Activated CD4-positive, alpha-beta memory T cell treated with anti-CD3 and anti-CD28 coated beads, Interleukin-2, amount 10 ng/mL, durations not matched to agents 7 days and 5 days (primary cell): ENCODE measurements at regions of chr1 and their contacts with region 1.

Region 1: DNA sequence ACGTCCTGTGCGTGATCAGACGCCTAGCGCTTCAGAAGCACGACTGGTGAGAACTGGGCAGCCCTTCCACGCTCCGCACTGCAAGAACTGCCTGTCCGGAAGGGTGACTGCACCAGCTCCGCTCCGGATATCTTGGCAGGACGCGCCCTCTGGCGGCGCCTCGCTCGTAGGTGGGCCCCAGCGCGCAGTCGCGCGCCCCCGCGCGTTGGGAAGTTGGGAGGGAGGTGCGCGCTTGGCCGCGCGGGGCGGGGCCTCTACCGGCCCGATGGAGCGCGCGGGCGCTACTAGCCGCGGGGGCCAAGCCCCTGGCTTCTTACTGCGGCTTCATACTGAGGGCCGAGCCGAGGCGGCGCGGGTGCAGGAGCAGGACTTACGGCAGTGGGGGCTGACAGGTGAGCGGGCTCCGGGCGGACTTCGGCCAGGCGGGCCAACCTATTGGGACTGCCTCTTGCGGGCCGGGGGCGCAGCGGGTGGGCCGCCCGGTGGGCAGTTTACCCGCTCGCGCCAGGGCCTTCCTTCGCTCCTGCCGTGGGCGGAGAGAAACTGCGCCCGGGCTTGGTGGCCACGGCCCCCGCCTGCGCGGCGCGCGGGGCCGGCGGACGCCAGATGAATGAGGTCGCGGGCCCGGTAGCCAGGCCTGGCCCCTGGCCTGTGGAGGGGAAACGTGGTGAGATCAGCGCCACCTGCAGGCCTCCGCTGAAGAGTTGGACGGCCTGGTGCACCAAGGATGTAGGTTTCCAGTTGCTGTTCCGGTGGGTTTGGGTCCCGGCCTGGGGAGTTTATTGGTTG is at the start of gene CHD1L:
- DNase-seq: peak; percentile 95
- H3K4me3 Mint-ChIP-seq: peak within 1 kb of the TSS; percentile 95
- H3K27ac Mint-ChIP-seq: peak within 1 kb of the TSS; percentile 83
- H3K4me1 Mint-ChIP-seq: peaks cover 43% of the 10 kb centered on the region
- H3K27me3 Mint-ChIP-seq: peaks cover 3% of the 10 kb centered on the region
- total RNA-seq, gene CHD1L: 70.0 to 70.9 TPM

Region 2: DNA sequence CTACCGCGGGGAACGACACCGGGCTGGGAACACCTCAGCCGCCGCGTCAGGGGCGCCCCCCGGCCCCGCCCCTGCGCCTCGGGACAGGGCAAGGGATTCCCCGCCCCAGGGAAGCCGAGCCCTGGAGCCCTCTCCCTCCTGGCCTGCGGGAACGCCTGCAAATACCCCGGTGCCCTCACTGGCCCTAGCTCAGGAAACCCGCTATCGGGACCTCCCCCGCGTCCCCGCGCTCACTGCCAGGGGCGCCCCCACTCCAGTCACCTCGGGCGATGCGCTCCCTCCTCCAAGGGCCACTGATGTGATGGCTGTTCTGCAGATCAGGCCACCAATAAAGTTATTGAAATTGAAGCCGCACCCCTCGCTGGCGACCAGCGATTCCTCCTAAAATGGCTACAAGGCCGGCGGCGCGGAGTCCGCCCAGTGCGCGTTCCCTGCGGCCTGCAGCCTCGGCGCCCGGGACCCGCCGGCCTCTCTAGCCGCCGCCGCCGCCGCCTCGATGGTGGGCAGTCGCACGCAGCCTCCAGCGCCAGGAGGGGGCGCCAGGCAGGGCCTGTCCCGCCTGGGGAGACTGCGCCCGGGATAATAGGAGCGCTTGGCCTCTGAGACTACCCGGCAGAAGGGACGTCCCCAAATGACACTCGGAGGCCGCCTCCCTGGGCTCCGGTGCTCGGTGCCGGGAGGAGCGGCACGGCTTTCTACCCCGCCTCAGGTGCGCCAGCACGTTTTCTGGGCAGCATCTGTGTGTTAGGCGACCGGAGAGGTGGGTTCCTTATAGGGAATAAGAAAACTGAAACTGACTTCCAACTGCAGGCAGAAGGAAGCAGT is 70.3 kb before region 1 on chr1 and contains the start of gene PRKAB2:
- CTCF ChIA-PET with region 1: interaction called, 65 read pairs
- POLR2A ChIA-PET with region 1: interaction called, 59 read pairs
- DNase-seq: peak; percentile 94
- H3K4me3 Mint-ChIP-seq: peak within 1 kb of the TSS; percentile 94
- H3K27ac Mint-ChIP-seq: peak within 1 kb of the TSS; percentile 91
- H3K4me1 Mint-ChIP-seq: peaks cover 36% of the 10 kb centered on the region
- H3K27me3 Mint-ChIP-seq: peaks cover 3% of the 10 kb centered on the region
- total RNA-seq, gene PRKAB2: 13.3 to 15.5 TPM

Region 3: DNA sequence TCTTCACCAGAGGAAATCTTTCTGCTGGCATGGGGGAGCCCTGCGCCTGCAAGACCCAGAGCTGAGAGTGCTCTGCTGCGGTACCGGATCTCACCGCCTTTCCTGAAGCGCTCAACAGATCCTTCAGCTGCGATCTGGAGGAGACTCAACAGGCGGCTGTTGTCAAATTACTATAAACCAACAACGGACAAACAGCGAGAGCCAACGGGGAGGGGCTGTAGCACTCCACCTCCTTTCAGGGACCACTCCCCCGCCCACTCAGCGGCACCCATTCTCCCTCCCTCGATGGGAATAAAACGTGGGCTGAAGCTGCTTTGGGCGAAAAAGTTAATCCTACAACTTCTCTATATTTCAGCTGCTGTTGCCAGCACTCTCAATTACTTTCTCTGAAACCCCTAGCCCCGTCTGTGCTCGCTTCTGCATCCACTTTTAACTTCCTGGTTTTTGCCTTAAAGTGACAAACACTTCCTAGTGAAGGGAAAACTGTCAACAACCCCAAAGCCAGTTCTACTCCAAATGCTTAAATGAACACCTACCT is 17.4 kb before region 1 on chr1 and contains the start of gene FMO5:
- CTCF ChIA-PET with region 1: interaction called, 8 read pairs
- POLR2A ChIA-PET with region 1: interaction called, 19 read pairs
- DNase-seq: peak; percentile 61
- H3K4me3 Mint-ChIP-seq: peak within 1 kb of the TSS; percentile 89
- H3K27ac Mint-ChIP-seq: peak within 1 kb of the TSS; percentile 44
- H3K4me1 Mint-ChIP-seq: peaks cover 18% of the 10 kb centered on the region
- H3K27me3 Mint-ChIP-seq: peaks cover 1% of the 10 kb centered on the region
- total RNA-seq, gene FMO5: 0.53 to 0.73 TPM

Region 4: GRCh38 chr1:147313250-147313649 is 70.6 kb after region 1 on chr1:
- CTCF ChIA-PET with region 1: no interaction called
- POLR2A ChIA-PET with region 1: no interaction called
- DNase-seq: no peak
- H3K4me3 Mint-ChIP-seq: no peak overlapping the region
- H3K27ac Mint-ChIP-seq: no peak overlapping the region
- H3K4me1 Mint-ChIP-seq: no peaks in the 10 kb centered on the region
- H3K27me3 Mint-ChIP-seq: peaks cover 8% of the 10 kb centered on the region